ENCODE measurements at regions of chr9 and their contacts with region 1.

Region 1: DNA sequence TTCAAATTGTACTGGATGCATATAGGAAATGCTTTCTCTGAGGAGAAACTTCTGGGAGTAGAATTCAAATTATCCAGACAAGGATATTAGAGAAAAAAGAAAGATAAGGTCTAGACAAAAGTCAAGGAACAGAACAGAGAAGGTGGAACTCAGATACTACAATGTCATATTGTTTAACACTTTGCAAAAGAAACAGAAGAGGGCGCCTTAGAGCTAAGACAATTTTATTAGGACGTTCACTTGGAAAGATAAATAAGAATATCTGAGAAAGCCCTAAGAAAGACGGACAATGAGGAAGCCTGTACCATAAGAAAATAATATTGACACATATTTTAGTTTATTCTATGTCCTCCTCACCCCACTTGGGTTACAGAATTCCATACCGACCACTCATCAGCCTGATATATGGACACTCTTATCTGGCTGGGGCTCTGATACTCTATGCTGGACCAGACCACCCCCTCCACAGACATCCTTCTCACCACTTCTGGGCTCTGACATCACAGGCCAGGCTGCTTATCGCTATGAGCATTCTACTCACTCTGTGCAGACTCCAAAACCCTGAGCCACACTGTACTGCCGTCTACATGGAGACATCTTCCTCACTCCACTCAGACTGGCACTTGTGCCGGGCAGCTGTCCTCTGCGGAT is 9.1 kb upstream of the AK3 start:
- DNase-seq: peak; percentile 19 to 69 (median 34)
- ATAC-seq: peak; percentile 86
- H3K4me3 ChIP-seq: no peak overlapping the region
- H3K27ac ChIP-seq: no peak overlapping the region
- H3K4me1 ChIP-seq: peaks cover 0 to 2% of the 10 kb centered on the region in 2 experiments; a peak in 2 of 5 replicates
- H3K27me3 ChIP-seq: no peaks in the 10 kb centered on the region
- CTCF ChIP-seq: peak; percentile 36 to 62 (median 46); a peak in 4 of 6 replicates
- EP300 ChIP-seq: no peak
- POLR2A ChIP-seq: no peak
- RAD21 ChIP-seq: peak; percentile 26 to 74; a peak in 2 of 4 replicates

Region 2: GRCh38 chr9:4604678-4605095 is 145.5 kb before region 1 on chr9:
- CTCF ChIA-PET with region 1: no interaction called
- POLR2A ChIA-PET with region 1: no interaction called
- in situ Hi-C with region 1: no loop called
- intact Hi-C with region 1: loop called (anchors 10 kb)
- DNase-seq: peak; percentile 27 to 72 (median 40)
- ATAC-seq: peak; percentile 93
- H3K4me3 ChIP-seq: no peak overlapping the region
- H3K27ac ChIP-seq: no peak overlapping the region
- H3K4me1 ChIP-seq: peaks cover 0 to 3% of the 10 kb centered on the region in 2 experiments; a peak in 1 of 5 replicates
- H3K27me3 ChIP-seq: peaks cover 3 to 4% of the 10 kb centered on the region in 2 experiments; a peak in 3 of 5 replicates
- CTCF ChIP-seq: peak; percentile 31 to 64 (median 58); a peak in 5 of 6 replicates
- EP300 ChIP-seq: no peak
- POLR2A ChIP-seq: no peak
- RAD21 ChIP-seq: peak; percentile 9 to 55; a peak in 2 of 4 replicates

Region 3: DNA sequence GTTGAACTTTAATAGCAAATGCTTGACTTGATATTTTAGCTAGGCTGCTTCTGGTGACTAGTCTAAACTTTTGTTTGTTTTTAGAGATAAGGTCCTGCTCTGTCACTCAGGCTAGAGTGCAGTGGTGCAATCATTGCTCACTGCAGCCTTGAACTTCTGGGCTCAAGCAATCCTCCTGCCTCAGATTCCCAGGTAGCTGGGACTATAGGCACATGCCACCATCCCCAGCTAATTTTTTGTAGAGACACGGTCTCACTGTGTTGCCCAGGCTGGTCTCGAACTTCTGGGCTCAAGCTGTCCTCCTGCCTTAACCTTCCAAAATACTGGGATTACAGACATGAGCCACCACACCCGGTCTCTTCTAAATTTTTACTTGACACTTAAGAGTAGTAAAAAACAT is 50.1 kb before region 1 on chr9:
- CTCF ChIA-PET with region 1: no interaction called
- POLR2A ChIA-PET with region 1: no interaction called
- in situ Hi-C with region 1: no loop called
- intact Hi-C with region 1: no loop called
- DNase-seq: peak in 1 of 4 experiments; percentile 50
- ATAC-seq: peak; percentile 95
- H3K4me3 ChIP-seq: no peak overlapping the region
- H3K27ac ChIP-seq: peak overlapping the region; percentile 47; the same call in 1 of the 3 replicates
- H3K4me1 ChIP-seq: peaks cover 4% of the 10 kb centered on the region in 2 experiments; a peak in 1 of 5 replicates
- H3K27me3 ChIP-seq: no peaks in the 10 kb centered on the region
- CTCF ChIP-seq: no peak
- EP300 ChIP-seq: peak; percentile 41
- POLR2A ChIP-seq: no peak
- RAD21 ChIP-seq: no peak

Region 4: DNA sequence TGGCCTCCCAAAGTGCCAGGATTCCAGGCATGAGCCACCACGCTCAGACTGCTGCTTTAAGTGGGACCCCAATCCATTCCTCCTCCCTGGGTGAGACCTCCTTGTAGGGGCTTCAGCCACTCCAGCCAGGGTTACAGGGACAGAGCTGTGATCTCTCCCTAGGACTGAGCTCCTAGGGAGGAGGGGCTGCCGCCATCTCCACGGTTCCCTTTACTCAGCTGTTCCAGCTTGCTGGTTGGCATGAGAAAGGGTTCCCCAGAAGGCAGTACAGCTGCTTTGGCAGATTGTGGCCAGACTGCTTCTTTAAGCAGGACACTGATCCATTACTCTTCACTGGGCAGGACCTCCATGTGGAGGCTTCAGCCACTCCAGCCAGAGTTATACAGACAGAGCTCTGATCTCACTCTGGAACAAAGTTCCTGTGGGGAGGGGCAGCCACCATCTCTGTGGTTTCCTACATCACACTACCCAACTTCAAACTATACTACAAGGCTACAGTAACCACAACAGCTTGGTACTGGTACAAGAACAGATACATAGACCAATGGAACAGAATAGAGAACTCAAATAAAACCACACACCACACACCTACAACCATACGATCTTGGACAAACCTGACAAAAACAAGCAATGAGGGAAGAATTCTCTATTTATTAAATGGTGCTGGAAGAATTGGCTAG is 428.1 kb after region 1 on chr9:
- CTCF ChIA-PET with region 1: no interaction called
- POLR2A ChIA-PET with region 1: no interaction called
- in situ Hi-C with region 1: loop called (anchors 10 kb)
- intact Hi-C with region 1: loop called (anchors 10 kb)
- DNase-seq: no peak
- ATAC-seq: no peak
- H3K4me3 ChIP-seq: no peak overlapping the region
- H3K27ac ChIP-seq: no peak overlapping the region
- H3K4me1 ChIP-seq: no peaks in the 10 kb centered on the region
- H3K27me3 ChIP-seq: no peaks in the 10 kb centered on the region; a peak in 1 of 5 replicates
- CTCF ChIP-seq: no peak
- EP300 ChIP-seq: no peak
- POLR2A ChIP-seq: no peak
- RAD21 ChIP-seq: no peak

Region 5: DNA sequence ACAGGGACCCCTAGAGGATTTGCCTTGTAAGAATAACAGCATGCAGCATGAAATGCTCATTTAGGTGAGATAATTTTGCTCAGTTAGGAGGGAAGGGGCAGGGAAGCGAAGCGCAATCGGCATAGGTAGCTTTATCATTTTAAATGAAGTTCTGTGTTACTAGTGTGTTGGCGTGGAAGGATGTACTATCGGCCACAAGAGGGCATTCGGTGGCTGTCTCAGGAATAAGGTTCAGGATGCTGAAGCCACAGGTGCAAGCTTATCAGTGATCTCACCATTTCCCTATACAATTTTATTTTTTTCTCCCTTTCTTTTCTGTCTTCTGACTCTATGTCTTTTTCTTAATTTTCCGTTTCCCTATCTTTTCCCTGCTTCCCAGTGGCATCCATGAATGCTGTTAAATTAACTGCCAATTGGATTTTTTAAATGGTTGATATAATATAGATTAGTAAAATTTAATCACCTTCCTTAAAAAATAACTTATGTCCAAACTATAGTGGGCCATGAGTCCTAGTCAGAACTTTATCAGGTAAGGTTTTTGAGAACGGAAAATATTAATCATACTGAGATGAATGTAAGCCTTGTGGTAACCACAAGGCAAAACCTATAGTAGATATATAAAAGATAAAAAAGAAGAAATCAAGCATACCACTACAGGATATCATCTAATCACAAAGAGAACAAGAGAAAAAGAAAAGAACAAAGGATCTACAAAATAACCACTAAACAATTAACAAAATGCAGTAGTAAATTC is 436.4 kb after region 1 on chr9:
- CTCF ChIA-PET with region 1: no interaction called
- POLR2A ChIA-PET with region 1: no interaction called
- in situ Hi-C with region 1: no loop called
- intact Hi-C with region 1: loop called (anchors 10 kb)
- DNase-seq: peak; percentile 35 to 47 (median 41)
- ATAC-seq: peak; percentile 83
- H3K4me3 ChIP-seq: no peak overlapping the region
- H3K27ac ChIP-seq: no peak overlapping the region
- H3K4me1 ChIP-seq: peaks cover 0 to 5% of the 10 kb centered on the region in 2 experiments; a peak in 2 of 5 replicates
- H3K27me3 ChIP-seq: no peaks in the 10 kb centered on the region
- CTCF ChIP-seq: peak; percentile 54 to 65 (median 65)
- EP300 ChIP-seq: no peak
- POLR2A ChIP-seq: no peak
- RAD21 ChIP-seq: peak; percentile 60 to 70

Region 6: GRCh38 chr9:5263351-5264218 is 513.4 kb after region 1 on chr9:
- CTCF ChIA-PET with region 1: no interaction called
- POLR2A ChIA-PET with region 1: no interaction called
- in situ Hi-C with region 1: no loop called
- intact Hi-C with region 1: loop called (anchors 5 kb)
- DNase-seq: peak in 2 of 4 experiments; percentile 5 to 14
- ATAC-seq: peak; percentile 64; the same call in 2 of the 3 replicates
- H3K4me3 ChIP-seq: no peak overlapping the region
- H3K27ac ChIP-seq: no peak overlapping the region
- H3K4me1 ChIP-seq: no peaks in the 10 kb centered on the region
- H3K27me3 ChIP-seq: no peaks in the 10 kb centered on the region; a peak in 1 of 5 replicates
- CTCF ChIP-seq: peak; percentile 10 to 29 (median 11); a peak in 2 of 6 replicates
- EP300 ChIP-seq: no peak
- POLR2A ChIP-seq: no peak
- RAD21 ChIP-seq: peak in 1 of 2 experiments; percentile 32; a peak in 1 of 4 replicates

Region 7: DNA sequence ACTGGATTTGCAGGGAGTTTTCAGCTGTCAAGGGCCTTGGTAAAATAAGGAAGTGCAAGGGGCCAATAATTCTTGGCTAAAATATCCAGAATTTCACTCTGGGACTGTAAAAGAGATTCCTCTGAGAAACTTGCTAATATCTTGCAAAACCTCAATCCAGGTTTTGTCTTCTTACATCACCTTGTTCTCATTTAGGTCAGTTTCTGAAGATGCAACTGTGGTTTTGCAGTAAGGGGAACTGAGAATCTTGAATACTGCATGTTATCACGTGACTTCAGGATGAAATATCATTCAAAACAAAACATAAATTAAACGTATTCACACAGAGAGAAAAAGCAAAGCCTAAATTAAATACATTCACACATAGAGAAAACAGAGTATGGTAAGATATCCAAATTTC is 843.8 kb after region 1 on chr9:
- CTCF ChIA-PET with region 1: no interaction called
- POLR2A ChIA-PET with region 1: no interaction called
- in situ Hi-C with region 1: loop called (anchors 10 kb)
- intact Hi-C with region 1: loop called (anchors 10 kb)
- DNase-seq: no peak
- ATAC-seq: no peak
- H3K4me3 ChIP-seq: no peak overlapping the region
- H3K27ac ChIP-seq: no peak overlapping the region
- H3K4me1 ChIP-seq: no peaks in the 10 kb centered on the region
- H3K27me3 ChIP-seq: no peaks in the 10 kb centered on the region
- CTCF ChIP-seq: no peak
- EP300 ChIP-seq: no peak
- POLR2A ChIP-seq: no peak
- RAD21 ChIP-seq: no peak

Measured in K562 (cell line).